Gastrocnemius medialis (tissue), 4 donors: ENCODE measurements at regions of chr4 and their contacts with region 1.

Region 1: DNA sequence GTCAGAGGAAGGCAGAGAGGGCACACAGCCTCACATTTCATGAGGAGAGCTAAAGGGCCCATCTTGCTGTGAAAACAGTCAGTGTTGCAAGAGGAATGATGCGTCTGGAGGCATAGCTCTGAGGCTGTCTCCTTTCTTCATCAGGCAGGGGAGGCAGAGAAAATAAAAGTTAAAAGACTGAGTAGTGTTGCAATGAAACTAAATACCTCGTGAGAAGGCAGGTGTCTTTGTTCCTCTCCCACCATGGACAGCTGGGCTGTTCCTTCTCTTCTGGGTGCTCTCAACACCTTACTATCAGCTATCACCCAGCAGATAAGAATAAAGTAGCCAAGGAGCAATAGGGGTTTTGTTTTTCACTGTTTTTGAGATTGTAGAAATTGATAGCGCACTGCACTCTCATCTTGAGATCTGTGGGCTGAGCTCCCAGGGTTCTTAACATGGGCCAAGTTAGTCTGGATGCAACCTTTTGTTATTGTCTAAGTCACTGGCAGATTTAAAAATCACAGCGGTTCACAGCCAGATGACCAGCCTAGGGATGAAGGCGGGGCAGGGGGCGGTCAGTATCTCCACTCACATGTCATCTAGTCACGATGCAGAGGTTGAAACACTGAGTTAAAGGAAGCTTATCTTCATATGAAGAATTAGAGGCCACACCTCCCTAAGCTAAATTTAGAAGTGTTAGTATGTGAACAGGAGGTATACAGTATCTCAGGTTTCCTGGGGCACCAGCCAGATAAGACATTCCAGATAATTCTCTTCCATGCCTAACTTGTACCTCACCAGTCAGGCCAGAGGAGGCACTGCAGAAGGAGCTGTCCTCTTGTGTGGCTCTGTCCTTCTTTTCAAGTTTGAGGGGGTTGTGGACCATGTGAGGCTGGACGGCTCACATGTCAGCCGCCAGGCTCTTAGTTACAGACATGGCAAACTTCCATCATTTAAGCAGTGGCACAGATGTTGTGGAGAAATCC is 36.9 kb downstream of the PARM1 start:
- DNase-seq: peak; percentile 69 to 82
- ATAC-seq: peak; percentile 92 to 93
- H3K4me3 ChIP-seq: peak overlapping the region; percentile 7 to 29 (median 18)
- H3K27ac ChIP-seq: peak overlapping the region; percentile 82 to 90 (median 86)
- H3K4me1 ChIP-seq: peaks cover 29 to 48% of the 10 kb centered on the region in 2 donors
- H3K27me3 ChIP-seq: no peaks in the 10 kb centered on the region
- CTCF ChIP-seq: peak; percentile 53 to 67 (median 62)
- POLR2A ChIP-seq: peak in 1 of 2 donors; percentile 47

Region 2: GRCh38 chr4:74953647-74954046 is 16.1 kb before region 1 on chr4:
- in situ Hi-C with region 1: no loop called
- intact Hi-C with region 1: loop called (anchors 2 kb)
- DNase-seq: peak; percentile 43 to 64
- ATAC-seq: peak; percentile 95 to 97
- H3K4me3 ChIP-seq: no peak overlapping the region
- H3K27ac ChIP-seq: peak overlapping the region; percentile 56 to 74 (median 68)
- H3K4me1 ChIP-seq: peaks cover 27 to 38% of the 10 kb centered on the region in 2 donors
- H3K27me3 ChIP-seq: no peaks in the 10 kb centered on the region
- CTCF ChIP-seq: no peak
- POLR2A ChIP-seq: no peak

Region 3: GRCh38 chr4:74996996-74997395 is 27.2 kb after region 1 on chr4:
- in situ Hi-C with region 1: no loop called
- intact Hi-C with region 1: loop called (anchors 2 kb)
- DNase-seq: no peak
- ATAC-seq: no peak
- H3K4me3 ChIP-seq: no peak overlapping the region
- H3K27ac ChIP-seq: no peak overlapping the region
- H3K4me1 ChIP-seq: peaks cover 6 to 7% of the 10 kb centered on the region in 2 donors
- H3K27me3 ChIP-seq: no peaks in the 10 kb centered on the region
- CTCF ChIP-seq: no peak
- POLR2A ChIP-seq: no peak

Region 4: GRCh38 chr4:75004755-75005668 is 35.2 kb after region 1 on chr4:
- in situ Hi-C with region 1: no loop called
- intact Hi-C with region 1: loop called (anchors 1 kb)
- DNase-seq: peak; percentile 89 to 95
- ATAC-seq: peak; percentile 96 to 97
- H3K4me3 ChIP-seq: peak overlapping the region in 1 of 4 donors; percentile 35
- H3K27ac ChIP-seq: peak overlapping the region; percentile 82 to 85 (median 83)
- H3K4me1 ChIP-seq: peaks cover 22 to 32% of the 10 kb centered on the region in 2 donors
- H3K27me3 ChIP-seq: no peaks in the 10 kb centered on the region
- CTCF ChIP-seq: no peak
- POLR2A ChIP-seq: no peak